ENCODE measurements at regions of chr1 and their contacts with region 1.

Region 1: DNA sequence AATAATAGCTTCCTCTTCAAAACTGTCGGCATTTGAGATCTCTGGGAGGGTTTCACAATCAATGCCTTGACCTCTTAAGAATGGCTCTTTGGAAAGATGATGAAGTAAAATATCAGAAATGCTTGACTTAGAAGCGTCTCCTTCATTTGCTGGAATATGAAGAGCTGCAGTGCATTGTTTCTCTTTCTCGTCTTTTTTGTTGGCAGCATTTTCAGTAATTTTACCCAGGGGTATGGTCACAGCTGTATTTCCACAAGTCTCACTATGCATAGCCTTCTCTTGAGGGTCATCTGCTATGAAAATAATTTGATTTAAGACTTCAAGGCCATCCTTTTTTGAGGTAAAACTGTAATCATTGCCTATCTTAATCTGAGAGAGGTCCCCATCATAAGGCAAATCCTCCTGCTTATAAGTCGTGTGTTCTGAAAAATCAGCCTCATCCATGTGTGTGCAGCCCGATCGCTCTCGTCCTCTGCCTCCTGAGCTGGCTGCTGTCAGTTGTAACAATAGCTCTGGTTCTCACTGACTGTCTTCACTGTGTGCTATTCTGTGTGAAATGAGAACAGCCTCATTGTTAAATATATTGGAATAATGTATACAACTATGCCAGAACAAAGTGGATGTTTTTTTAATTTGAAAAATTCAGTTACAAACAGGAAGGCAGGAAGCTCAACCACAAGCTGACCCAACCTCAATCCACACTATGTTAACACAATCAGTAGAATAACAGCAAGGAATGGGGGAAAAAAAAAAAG is 4.5 kb downstream of the AKNAD1 start:
- DNase-seq: no peak
- CTCF ChIP-seq: no peak

Region 2: DNA sequence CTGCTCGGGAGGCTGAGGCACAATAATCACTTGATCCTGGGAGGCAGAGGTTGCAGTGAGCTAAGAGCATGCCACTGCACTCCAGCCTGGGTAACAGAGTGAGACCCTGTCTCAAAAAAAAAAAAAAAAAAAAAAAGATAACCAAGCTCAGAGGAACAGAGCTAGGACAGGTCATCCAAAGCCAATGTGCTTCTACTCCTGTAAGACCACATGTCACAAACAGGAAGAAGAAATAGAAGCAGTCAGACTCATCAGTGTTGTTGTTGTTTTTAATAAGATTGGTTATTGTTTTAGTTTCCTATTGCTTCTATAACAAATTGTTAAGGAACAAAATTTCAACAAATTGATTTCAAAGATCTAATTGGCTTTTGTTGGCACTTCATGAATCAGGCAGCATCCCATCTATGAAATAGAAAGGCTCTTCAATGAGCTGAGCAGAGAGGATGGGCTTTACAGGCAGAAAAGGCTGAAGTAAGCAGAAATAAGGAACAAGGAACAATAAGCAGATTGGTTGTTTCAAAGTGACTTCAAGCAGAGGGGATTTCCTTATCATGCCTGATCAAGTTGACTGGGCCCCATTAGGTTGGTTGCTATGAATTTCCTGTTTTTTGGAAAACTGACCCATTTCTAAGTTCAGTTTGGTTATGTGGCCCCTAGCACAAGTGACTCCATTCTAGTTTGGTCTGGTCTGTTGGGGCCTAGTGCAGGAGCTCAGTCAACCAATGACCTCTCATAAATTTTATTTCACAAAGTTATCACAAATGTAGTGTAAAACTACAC is 10.5 kb after region 1 on chr1:
- CTCF ChIA-PET with region 1: interaction called, 20 read pairs
- POLR2A ChIA-PET with region 1: no interaction called
- DNase-seq: no peak
- CTCF ChIP-seq: no peak

Measured in GM10248 (cell line).